MCF 10A (cell line): ENCODE measurements at regions of chr15 and their contacts with region 1.

Region 1: DNA sequence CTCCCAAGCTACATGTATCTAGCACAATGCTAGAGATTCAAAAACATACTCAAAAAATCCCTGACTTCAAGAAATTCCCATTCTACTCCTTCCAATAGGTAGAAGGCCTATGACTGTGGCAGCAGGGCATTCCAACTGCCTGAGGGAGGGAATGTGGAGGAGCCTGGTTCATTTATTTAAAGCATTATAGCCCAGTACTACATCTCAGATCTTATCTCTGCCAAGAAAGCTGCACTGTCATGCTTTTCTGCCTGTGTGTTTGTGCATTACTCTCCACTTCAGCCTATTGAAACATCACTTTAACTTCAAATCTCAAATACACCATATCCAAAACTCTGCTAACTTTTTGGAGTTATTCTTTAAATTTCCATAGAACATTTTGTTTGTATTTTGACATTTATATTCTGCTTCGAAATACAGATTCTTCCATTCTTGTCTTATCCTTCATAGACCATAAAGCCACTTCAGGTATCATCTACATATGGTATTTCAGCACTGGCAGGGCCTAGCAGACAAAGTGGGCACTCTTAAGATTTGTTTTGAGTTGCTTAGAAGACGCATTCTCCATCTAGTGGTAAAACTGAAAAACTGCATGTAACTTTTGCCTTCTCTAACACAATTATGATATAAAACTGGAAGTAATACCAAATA is 59.1 kb upstream of the NEDD4 start:
- DNase-seq: peak; percentile 58
- H3K4me3 Mint-ChIP-seq: no peak overlapping the region
- H3K27ac Mint-ChIP-seq: no peak overlapping the region
- H3K4me1 Mint-ChIP-seq: peaks cover 15% of the 10 kb centered on the region
- H3K27me3 Mint-ChIP-seq: no peaks in the 10 kb centered on the region
- CTCF ChIP-seq: peak; percentile 51

Region 2: GRCh38 chr15:55846116-55846707 is 206.3 kb before region 1 on chr15:
- CTCF ChIA-PET with region 1: interaction called, 4 read pairs
- POLR2A ChIA-PET with region 1: interaction called, 3 read pairs
- intact Hi-C with region 1: loop called (anchors 1 kb)
- DNase-seq: peak; percentile 81
- H3K4me3 Mint-ChIP-seq: no peak overlapping the region
- H3K27ac Mint-ChIP-seq: no peak overlapping the region
- H3K4me1 Mint-ChIP-seq: peaks cover 6% of the 10 kb centered on the region
- H3K27me3 Mint-ChIP-seq: no peaks in the 10 kb centered on the region
- CTCF ChIP-seq: peak; percentile 79

Region 3: GRCh38 chr15:55937040-55937439 is 115.5 kb before region 1 on chr15:
- CTCF ChIA-PET with region 1: no interaction called
- POLR2A ChIA-PET with region 1: no interaction called
- intact Hi-C with region 1: no loop called
- DNase-seq: no peak
- H3K4me3 Mint-ChIP-seq: no peak overlapping the region
- H3K27ac Mint-ChIP-seq: no peak overlapping the region
- H3K4me1 Mint-ChIP-seq: no peaks in the 10 kb centered on the region
- H3K27me3 Mint-ChIP-seq: no peaks in the 10 kb centered on the region
- CTCF ChIP-seq: no peak

Region 4: DNA sequence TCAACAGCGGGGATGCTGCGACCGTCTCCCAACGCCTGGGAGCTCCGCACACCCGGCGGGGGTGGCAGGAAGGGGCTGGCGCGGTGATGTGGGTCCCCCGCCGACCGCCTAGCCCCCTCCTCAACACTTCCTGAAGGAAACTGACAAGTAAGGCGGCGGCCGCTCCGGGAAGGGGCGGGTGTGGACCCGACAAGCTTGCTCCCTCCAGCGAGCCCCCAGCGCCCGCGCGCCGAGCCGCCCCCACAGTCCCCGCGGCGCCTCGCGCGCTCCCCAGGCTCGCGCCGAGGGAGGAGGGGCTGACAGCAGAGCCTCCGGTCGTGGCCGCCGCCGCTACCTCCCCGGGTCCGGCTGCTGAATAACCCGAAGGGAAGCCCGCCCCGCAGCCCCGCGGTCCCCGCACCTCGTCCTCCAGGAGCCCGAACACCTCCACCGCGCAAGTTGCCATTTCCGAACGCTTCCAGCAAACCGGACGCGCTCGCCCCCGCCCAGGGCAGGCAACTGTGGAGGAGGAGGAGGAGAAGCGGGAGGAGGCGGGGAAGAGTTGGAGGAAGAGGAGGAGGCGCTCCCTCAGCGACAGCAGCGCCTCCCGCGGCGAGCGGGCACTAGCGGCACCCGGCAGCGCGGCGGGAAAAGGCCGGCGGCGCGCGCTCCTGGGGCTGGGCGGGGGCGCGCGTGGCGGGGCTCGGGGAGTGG is 59.3 kb before region 1 on chr15 and contains the start of gene NEDD4:
- CTCF ChIA-PET with region 1: interaction called, 79 read pairs
- POLR2A ChIA-PET with region 1: interaction called, 27 read pairs
- intact Hi-C with region 1: loop called (anchors 1 kb)
- DNase-seq: peak; percentile 90
- H3K4me3 Mint-ChIP-seq: peak within 1 kb of the TSS; percentile 83
- H3K27ac Mint-ChIP-seq: peak within 1 kb of the TSS; percentile 72
- H3K4me1 Mint-ChIP-seq: peaks cover 37% of the 10 kb centered on the region
- H3K27me3 Mint-ChIP-seq: no peaks in the 10 kb centered on the region
- CTCF ChIP-seq: peak; percentile 44
- total RNA-seq, gene NEDD4: 57.7 and 60.3 TPM in 2 replicates

Region 5: GRCh38 chr15:56040081-56041035 is 12.2 kb before region 1 on chr15:
- CTCF ChIA-PET with region 1: interaction called, 29 read pairs
- POLR2A ChIA-PET with region 1: interaction called, 11 read pairs
- intact Hi-C with region 1: no loop called
- DNase-seq: peak; percentile 96
- H3K4me3 Mint-ChIP-seq: peak overlapping the region; percentile 42
- H3K27ac Mint-ChIP-seq: peak overlapping the region; percentile 86
- H3K4me1 Mint-ChIP-seq: peaks cover 34% of the 10 kb centered on the region
- H3K27me3 Mint-ChIP-seq: no peaks in the 10 kb centered on the region
- CTCF ChIP-seq: no peak

Region 6: GRCh38 chr15:56064152-56064551 is 11.6 kb after region 1 on chr15:
- CTCF ChIA-PET with region 1: interaction called, 16 read pairs
- POLR2A ChIA-PET with region 1: no interaction called
- intact Hi-C with region 1: no loop called
- DNase-seq: no peak
- H3K4me3 Mint-ChIP-seq: no peak overlapping the region
- H3K27ac Mint-ChIP-seq: no peak overlapping the region
- H3K4me1 Mint-ChIP-seq: peaks cover 16% of the 10 kb centered on the region
- H3K27me3 Mint-ChIP-seq: no peaks in the 10 kb centered on the region
- CTCF ChIP-seq: no peak